GM18951 (cell line): ENCODE measurements at regions of chr15 and their contacts with region 1.

Region 1: GRCh38 chr15:36883713-36884517 is 216.4 kb downstream of the MEIS2 start:
- POLR2A ChIP-seq: no peak

Region 2: GRCh38 chr15:35545824-35546510 is 1337.9 kb before region 1 on chr15 and contains the start of gene DPH6:
- in situ Hi-C with region 1: loop called (anchors 25 kb)
- POLR2A ChIP-seq: peak; percentile 85

Region 3: DNA sequence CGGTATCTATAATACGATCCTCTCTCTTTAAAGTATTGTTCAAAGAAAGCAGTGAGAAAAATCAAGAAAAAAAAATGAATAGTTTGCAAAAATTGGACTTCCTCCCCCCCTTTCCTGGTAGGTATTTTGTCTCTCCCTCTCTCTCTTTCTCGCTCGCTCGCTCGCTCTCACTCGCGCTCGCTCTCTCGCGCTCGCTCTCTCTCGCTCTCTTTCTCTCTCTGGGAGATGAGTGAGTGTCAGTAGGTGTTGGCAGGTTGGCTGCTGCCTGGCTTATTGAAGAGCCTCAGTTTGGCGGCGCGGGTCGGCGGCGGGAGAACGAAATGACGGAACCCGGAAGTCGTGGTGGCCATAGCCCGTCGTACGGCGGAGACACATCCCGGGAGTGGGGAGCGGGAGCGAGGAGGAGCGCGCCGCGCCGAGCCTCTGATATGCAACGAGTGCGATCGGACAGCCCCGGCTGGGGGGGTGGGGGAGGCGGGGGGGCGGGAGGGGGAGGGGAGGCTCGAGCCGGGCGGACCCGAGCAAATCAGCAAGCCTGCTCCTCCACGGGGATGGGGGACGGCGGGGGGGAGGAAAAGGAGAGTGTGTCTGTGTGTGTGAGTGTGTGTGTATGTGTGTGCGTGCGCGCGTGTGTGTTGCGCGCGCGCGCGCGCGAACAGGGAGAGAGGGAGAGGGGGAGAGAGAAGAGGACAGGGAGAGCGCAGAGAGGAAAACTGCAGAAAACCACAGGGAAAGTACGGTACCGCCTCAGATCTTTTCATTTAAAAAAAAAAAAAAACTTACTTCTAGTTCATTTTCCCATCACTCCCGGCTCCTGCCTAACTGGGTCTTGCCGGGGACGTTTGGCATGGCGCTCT is 216.4 kb after region 1 on chr15 and contains the start of gene MEIS2:
- in situ Hi-C with region 1: loop called (anchors 10 kb)
- POLR2A ChIP-seq: peak; percentile 52

Region 4: DNA sequence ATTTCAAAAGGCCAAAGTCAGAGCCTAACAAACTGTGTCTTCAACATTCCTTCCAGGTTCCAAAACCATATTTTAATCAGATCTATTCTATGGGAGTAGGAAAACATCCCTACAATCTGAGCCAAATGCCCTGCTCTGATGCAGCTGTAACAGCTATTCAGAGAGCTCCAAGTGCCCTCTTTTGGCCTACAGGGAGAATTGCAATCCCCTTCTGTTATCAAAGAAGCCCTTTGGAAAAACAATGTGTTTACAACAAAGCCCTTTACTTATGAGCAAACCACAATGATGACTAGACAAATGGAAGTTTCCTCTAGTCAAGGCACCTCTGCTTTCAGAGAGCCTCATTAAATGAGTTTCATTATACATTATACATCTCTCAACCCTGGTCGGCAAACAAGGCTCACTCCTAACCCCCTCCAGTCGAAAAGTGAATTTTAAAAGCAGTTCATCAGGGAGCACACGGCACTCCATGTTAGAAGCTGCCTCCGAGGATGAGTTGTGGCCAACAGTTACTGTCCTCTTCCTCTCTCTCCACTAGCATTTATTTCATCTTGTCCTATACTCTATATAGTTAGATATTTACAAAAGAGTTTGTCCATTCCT is 1008.0 kb after region 1 on chr15:
- in situ Hi-C with region 1: loop called (anchors 25 kb)
- POLR2A ChIP-seq: no peak